ENCODE measurements at regions of chr16 and their contacts with region 1.

Region 1: GRCh38 chr16:50665128-50665878 is 15.8 kb downstream of the SNX20 start:
- DNase-seq: peak; percentile 89
- H3K4me3 Mint-ChIP-seq: peak overlapping the region; percentile 57
- H3K27ac Mint-ChIP-seq: peak overlapping the region; percentile 72
- H3K4me1 Mint-ChIP-seq: peaks cover 29% of the 10 kb centered on the region
- H3K27me3 Mint-ChIP-seq: no peaks in the 10 kb centered on the region

Region 2: DNA sequence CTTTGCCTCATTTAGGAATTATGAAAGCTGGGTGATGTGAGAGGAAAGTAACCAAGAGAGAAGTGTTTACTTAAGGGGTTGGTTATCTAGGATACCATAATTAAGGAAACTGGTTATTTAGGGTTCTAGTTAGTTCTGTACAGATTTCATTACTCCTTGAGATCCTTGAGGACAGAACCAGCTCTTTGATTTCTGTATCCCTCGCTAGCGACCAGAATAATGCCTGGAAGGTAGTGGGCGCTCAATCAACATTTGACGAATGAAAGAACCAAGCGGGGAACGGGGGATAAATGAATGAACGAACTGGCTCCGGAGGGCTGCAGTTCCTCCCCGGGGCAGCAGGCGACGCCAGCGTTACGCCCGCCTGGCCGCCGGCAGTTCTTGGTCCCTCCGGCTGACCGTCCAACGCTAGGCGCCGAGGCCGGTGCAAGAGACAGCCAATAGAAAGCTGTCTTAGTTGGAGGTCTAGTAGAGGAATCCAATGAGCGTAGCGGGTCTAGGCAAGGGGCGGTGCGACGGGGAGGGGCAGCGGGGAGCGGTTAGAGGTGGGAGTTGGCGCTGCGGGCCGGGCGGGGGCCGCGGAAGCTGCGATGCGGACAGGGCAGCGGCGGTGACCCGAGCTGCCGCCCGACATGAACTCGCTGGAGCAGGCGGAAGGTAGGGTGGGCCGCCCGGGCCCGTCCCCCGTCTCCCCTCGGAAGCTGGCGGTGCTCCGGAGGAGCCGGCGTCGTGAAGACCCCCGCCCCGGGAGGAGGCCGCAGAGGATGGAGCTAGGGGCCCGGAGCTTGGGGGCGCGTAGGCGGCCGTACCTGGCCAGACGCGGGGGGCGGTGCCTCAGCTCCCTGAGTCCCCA is 640.4 kb before region 1 on chr16 and contains the start of gene CNEP1R1:
- CTCF ChIA-PET with region 1: interaction called, 9 read pairs
- intact Hi-C with region 1: loop called (anchors 1 kb)
- DNase-seq: peak; percentile 94
- H3K4me3 Mint-ChIP-seq: peak within 1 kb of the TSS; percentile 91
- H3K27ac Mint-ChIP-seq: peak within 1 kb of the TSS; percentile 82
- H3K4me1 Mint-ChIP-seq: peaks cover 22% of the 10 kb centered on the region
- H3K27me3 Mint-ChIP-seq: no peaks in the 10 kb centered on the region
- total RNA-seq, gene CNEP1R1: 28.2 to 30.9 TPM

Region 3: GRCh38 chr16:50326949-50327402 is 338.3 kb before region 1 on chr16:
- CTCF ChIA-PET with region 1: interaction called, 26 read pairs
- intact Hi-C with region 1: loop called (anchors 2 kb)
- DNase-seq: peak; percentile 81
- H3K4me3 Mint-ChIP-seq: no peak overlapping the region
- H3K27ac Mint-ChIP-seq: peak overlapping the region; percentile 50
- H3K4me1 Mint-ChIP-seq: peaks cover 56% of the 10 kb centered on the region
- H3K27me3 Mint-ChIP-seq: no peaks in the 10 kb centered on the region

Region 4: DNA sequence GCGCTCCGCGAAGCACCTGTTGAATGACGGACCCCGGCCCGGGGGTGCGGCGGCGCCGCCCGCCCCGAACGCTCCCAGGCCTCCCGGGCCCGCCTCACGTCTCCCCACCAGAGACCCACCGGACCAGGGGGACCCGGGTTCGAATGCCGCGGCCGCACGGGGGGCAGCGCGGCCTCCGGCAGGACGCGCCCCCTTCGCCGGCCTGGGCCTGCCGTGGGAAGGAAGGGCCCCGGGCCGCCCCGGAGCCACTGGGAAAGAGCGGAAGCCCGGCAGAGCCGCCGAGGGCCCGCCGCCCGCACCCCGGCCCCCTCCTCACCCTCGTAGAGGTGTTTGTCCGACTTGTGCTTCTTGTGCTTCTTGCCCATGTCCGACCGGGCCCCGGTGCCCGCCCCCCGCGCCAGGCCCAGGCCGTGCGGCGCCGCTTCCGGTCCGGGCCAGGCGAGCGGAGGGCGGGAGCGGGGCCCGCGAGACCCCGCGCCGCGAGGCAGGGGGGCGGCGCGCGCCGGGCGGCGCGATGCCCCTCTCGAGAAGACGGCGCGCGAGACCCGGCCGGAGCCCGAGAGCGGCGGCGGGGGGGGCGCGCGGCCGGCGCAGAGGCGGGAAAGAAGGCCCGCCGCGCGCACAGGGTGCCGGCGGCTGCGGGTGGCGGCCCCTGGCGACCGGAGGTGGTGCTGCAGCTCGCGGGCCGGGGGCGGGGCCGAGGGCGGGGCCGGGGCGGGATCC is 296.7 kb before region 1 on chr16 and contains the start of gene BRD7:
- CTCF ChIA-PET with region 1: interaction called, 46 read pairs
- intact Hi-C with region 1: loop called (anchors 1 kb)
- DNase-seq: peak; percentile 62
- H3K4me3 Mint-ChIP-seq: peak within 1 kb of the TSS; percentile 96
- H3K27ac Mint-ChIP-seq: peak within 1 kb of the TSS; percentile 86
- H3K4me1 Mint-ChIP-seq: peaks cover 46% of the 10 kb centered on the region
- H3K27me3 Mint-ChIP-seq: no peaks in the 10 kb centered on the region
- total RNA-seq, gene BRD7: 96.7 to 101 TPM

Region 5: GRCh38 chr16:50585331-50585776 is 79.9 kb before region 1 on chr16:
- CTCF ChIA-PET with region 1: interaction called, 5 read pairs
- intact Hi-C with region 1: loop called (anchors 2 kb)
- DNase-seq: no peak
- H3K4me3 Mint-ChIP-seq: no peak overlapping the region
- H3K27ac Mint-ChIP-seq: no peak overlapping the region
- H3K4me1 Mint-ChIP-seq: peaks cover 34% of the 10 kb centered on the region
- H3K27me3 Mint-ChIP-seq: no peaks in the 10 kb centered on the region

Region 6: DNA sequence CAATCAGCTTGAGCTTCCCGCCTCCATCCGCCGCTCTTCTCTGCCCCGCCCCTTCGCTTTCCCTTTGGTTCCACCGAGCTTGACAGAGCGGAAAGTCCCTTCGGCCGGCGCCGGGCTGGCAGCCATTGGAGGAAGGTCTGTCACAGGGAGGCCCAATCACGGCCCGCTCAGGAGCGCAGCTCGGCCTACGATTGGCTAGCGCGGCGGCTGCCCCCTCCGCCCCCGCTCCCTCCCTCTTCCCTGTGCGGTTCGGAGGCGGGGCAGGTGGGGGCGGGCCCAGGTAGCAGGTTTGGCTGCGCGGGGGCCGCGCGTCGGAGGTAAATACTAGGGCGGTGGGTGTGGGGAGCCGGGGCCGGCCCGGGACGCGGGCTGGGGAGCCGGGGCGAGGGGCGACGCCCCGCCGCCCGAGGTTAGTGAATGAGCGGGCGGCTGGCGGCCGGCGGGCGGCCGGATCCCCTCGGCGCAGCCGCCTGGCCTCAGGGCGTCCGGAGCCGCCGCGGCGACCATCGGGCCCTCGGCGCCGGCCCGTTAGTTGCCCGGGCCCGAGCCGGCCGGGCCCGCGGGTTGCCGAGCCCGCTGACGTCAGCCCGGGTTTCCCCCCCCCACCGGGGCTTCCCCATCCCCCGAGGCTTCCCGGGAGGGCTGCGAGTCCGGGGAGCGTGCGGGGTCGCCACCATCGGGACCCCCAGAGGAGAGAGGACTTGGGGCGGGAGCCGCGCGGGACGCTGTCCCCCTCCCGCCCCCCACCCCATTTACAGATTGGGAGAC is 76.7 kb after region 1 on chr16 and contains the start of gene CYLD:
- CTCF ChIA-PET with region 1: interaction called, 532 read pairs
- intact Hi-C with region 1: loop called (anchors 1 kb)
- DNase-seq: peak; percentile 100
- H3K4me3 Mint-ChIP-seq: peak within 1 kb of the TSS; percentile 90
- H3K27ac Mint-ChIP-seq: peak within 1 kb of the TSS; percentile 96
- H3K4me1 Mint-ChIP-seq: peaks cover 42% of the 10 kb centered on the region
- H3K27me3 Mint-ChIP-seq: no peaks in the 10 kb centered on the region
- total RNA-seq, gene CYLD: 70.8 to 71.9 TPM

Measured in activated naive CD4-positive, alpha-beta T cell treated with anti-CD3 and anti-CD28 coated beads for 36 hours (primary cell).